ENCODE measurements at regions of chr3 and their contacts with region 1.

Region 1: DNA sequence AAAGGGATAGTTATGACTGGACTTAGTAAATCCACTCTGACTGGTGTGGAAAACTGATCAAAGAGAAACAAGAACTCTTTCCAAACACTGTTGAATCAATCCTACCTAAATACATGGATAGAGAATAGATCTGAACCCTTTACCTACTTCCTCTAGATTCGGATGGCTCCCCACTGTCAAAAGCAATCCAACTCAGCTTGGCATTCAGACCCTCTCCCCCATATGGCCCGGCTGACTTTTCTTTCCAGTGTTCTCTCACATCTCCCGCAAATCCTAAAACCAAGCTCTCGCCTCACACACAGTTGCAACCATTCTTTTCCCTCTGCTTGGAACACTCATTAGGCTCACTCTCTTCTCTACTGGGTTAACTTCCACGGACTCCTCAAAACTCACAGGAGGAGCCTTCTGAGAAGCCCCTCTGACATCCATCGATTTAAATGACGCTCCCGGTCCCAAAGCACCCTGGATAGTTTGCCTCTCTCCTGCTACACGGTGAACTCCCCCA is 639 bp downstream of the SPICE1 start:
- DNase-seq: no peak
- H3K4me3 Mint-ChIP-seq: no peak overlapping the region
- H3K27ac Mint-ChIP-seq: no peak overlapping the region
- H3K4me1 Mint-ChIP-seq: peaks cover 9% of the 10 kb centered on the region
- H3K27me3 Mint-ChIP-seq: peaks cover 23% of the 10 kb centered on the region

Region 2: DNA sequence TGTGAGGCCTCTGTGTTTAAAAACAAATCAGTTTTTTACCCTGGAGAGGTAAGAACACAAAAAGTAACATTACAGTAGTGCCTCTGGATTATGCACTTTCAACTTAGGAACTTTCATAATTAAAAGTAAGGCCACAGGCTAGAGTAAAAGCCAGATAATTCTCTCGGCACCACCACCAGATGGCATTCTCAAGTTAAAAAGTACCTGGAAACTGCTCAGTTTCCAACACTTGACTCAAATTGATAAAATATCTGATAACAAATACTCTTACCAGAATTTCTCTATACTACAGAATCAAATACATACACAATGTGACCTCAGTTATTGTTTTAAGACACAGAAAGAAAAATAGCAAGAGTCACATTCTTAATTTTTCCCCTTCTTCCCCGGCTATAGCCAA is 19.3 kb before region 1 on chr3:
- CTCF ChIA-PET with region 1: interaction called, 22 read pairs
- POLR2A ChIA-PET with region 1: interaction called, 5 read pairs
- DNase-seq: peak; percentile 47
- H3K4me3 Mint-ChIP-seq: no peak overlapping the region
- H3K27ac Mint-ChIP-seq: no peak overlapping the region
- H3K4me1 Mint-ChIP-seq: peaks cover 8% of the 10 kb centered on the region
- H3K27me3 Mint-ChIP-seq: no peaks in the 10 kb centered on the region

Region 3: GRCh38 chr3:113531826-113532697 is 17.7 kb after region 1 on chr3 and contains the start of gene SIDT1:
- CTCF ChIA-PET with region 1: interaction called, 14 read pairs
- POLR2A ChIA-PET with region 1: interaction called, 62 read pairs
- DNase-seq: peak; percentile 75
- H3K4me3 Mint-ChIP-seq: peak within 1 kb of the TSS; percentile 98
- H3K27ac Mint-ChIP-seq: peak within 1 kb of the TSS; percentile 96
- H3K4me1 Mint-ChIP-seq: peaks cover 52% of the 10 kb centered on the region
- H3K27me3 Mint-ChIP-seq: peaks cover 5% of the 10 kb centered on the region
- total RNA-seq, gene SIDT1: 23.9 to 25.5 TPM